Breast epithelium (tissue), 4 donors: ENCODE measurements at regions of chr12 and their contacts with region 1.

Region 1: DNA sequence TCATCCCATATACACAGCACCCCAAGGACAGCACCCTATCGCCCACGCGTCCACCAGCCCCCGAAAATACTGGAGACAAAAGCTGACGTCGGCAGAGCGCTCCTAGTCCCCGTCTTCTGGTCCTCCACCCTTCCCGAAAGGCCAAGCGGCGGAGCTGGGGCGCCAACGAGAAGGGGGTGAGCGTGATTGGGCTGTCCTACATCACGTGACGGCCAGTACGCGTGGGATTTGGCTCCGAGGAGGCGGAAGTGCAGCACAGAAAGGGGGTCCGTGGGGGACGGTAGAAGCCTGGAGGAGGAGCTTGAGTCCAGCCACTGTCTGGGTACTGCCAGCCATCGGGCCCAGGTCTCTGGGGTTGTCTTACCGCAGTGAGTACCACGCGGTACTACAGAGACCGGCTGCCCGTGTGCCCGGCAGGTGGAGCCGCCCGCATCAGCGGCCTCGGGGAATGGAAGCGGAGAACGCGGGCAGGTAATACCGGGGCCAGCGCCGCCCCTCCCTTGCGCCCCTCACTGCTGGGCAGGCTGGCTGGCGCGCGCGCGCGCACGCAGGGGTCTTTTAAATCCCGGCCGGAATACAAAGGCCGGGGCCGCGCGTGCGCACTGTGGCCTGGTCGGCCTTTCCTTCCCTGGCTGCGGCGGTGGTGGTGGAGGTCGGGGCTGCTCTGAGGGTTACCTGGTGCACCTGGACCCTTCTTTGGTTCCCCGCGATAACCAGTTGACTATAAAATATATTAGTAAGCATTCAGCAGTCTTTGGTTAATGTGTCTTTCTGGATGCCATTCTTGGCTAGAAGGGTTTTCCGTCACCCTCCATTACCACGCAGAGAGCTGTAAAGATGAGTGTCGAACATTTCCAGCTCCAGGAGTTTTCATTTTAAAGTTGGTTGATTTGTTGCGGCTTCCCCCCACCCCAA is at the start of gene TDG:
- DNase-seq: peak; percentile 98
- H3K4me3 ChIP-seq: peak within 1 kb of the TSS; percentile 75 to 95 (median 80)
- H3K27ac ChIP-seq: peak within 1 kb of the TSS; percentile 95 to 98
- H3K4me1 ChIP-seq: peaks cover 0 to 5% of the 10 kb centered on the region in 2 donors
- H3K27me3 ChIP-seq: no peaks in the 10 kb centered on the region
- CTCF ChIP-seq: peak in 2 of 3 donors; percentile 6 to 31
- POLR2A ChIP-seq: peak; percentile 85
- total RNA-seq, gene TDG: 14.4 to 37.5 (median 29.8) TPM

Region 2: GRCh38 chr12:103241184-103241583 is 724.7 kb before region 1 on chr12:
- intact Hi-C with region 1: no loop called
- DNase-seq: no peak
- H3K4me3 ChIP-seq: no peak overlapping the region
- H3K27ac ChIP-seq: no peak overlapping the region
- H3K4me1 ChIP-seq: no peaks in the 10 kb centered on the region
- H3K27me3 ChIP-seq: no peaks in the 10 kb centered on the region
- CTCF ChIP-seq: no peak
- POLR2A ChIP-seq: no peak

Region 3: DNA sequence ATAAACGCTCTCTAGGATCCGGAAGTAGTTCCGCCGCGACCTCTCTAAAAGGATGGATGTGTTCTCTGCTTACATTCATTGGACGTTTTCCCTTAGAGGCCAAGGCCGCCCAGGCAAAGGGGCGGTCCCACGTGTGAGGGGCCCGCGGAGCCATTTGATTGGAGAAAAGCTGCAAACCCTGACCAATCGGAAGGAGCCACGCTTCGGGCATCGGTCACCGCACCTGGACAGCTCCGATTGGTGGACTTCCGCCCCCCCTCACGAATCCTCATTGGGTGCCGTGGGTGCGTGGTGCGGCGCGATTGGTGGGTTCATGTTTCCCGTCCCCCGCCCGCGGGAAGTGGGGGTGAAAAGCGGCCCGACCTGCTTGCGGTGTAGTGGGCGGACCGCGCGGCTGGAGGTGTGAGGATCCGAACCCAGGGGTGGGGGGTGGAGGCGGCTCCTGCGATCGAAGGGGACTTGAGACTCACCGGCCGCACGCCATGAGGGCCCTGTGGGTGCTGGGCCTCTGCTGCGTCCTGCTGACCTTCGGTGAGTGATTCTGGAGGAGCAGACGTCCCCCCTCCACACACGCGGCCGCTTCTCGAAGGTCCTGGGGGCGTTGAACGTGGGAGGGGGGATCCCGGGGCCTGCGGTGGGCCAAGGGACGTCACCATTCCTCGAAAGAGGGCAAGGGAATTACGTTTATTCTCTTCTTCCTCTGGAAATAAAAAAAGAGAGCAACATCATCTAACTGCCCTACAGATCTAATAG is 35.6 kb before region 1 on chr12 and contains the start of gene HSP90B1:
- intact Hi-C with region 1: loop called (anchors 2 kb)
- DNase-seq: peak; percentile 100
- H3K4me3 ChIP-seq: peak within 1 kb of the TSS; percentile 72 to 87 (median 84)
- H3K27ac ChIP-seq: peak within 1 kb of the TSS; percentile 95 to 96
- H3K4me1 ChIP-seq: peaks cover 7 to 8% of the 10 kb centered on the region in 2 donors
- H3K27me3 ChIP-seq: no peaks in the 10 kb centered on the region
- CTCF ChIP-seq: no peak
- POLR2A ChIP-seq: peak; percentile 86
- total RNA-seq, gene HSP90B1: 341 to 456 (median 362) TPM

Region 4: DNA sequence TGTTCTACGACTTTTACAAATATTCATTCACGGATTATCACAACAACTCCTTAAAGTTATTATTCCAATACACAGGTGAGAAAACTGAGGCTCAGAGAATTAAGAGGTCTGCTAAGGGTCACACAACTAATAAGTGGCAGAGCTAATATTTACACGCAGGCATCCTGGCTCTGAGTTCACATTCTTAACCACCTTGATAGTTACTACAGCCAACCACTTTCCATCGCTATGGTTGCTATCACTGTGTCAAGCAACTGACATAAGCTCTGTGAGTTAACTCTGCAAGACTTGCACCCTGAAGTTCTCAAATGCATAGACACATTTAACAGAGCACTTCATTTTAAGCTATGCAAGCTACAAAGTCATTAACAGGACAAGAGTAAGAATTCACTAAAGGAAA is 80.5 kb after region 1 on chr12:
- intact Hi-C with region 1: loop called (anchors 2 kb)
- DNase-seq: no peak
- H3K4me3 ChIP-seq: no peak overlapping the region
- H3K27ac ChIP-seq: no peak overlapping the region
- H3K4me1 ChIP-seq: peaks cover 0 to 11% of the 10 kb centered on the region in 2 donors
- H3K27me3 ChIP-seq: no peaks in the 10 kb centered on the region
- CTCF ChIP-seq: no peak
- POLR2A ChIP-seq: no peak